ENCODE measurements at regions of chr1 and their contacts with region 1.

Region 1: GRCh38 chr1:7902478-7903085 is 38.1 kb downstream of the TNFRSF9 start:
- DNase-seq: peak; percentile 42
- H3K4me3 ChIP-seq: no peak overlapping the region
- CTCF ChIP-seq: peak; percentile 73

Region 2: GRCh38 chr1:8015036-8015808 is 112.6 kb after region 1 on chr1:
- in situ Hi-C with region 1: loop called (anchors 25 kb)
- DNase-seq: peak; percentile 74
- H3K4me3 ChIP-seq: peak overlapping the region; percentile 0
- CTCF ChIP-seq: peak; percentile 48